ENCODE measurements at regions of chr6 and their contacts with region 1.

Region 1: DNA sequence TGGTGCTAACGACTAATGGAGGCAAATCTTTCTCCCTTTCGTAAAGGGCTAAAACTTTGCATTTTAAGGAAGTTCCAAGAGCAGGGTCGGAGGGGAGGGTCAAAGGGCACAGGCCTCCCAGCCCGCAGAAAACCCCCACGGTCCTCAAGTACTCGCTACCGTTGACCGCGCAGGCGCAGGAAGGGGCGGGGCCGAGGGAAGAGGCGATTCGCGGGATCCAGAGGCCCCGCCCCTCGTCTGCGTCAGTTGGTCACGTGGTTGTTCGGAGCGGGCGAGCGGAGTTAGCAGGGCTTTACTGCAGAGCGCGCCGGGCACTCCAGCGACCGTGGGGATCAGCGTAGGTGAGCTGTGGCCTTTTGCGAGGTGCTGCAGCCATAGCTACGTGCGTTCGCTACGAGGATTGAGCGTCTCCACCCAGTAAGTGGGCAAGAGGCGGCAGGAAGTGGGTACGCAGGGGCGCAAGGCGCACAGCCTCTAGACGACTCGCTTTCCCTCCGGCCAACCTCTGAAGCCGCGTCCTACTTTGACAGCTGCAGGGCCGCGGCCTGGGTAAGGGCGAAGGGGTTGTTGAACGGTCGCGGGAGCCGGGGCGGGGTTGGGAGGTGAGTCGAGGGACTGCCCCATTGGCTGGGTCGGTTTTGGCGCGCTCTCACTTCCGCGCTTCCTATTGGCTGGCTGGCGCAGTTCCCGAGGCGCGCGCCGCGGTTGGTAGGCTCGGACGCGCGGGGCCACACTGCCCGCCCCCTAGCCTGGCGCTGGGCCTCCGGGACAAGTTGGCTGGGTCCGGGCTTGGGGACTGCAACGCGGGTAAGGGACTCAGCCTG is at the start of gene GMNN:
- DNase-seq: peak; percentile 95 to 99 (median 97)
- ATAC-seq: peak; percentile 83
- H3K4me3 ChIP-seq: peak within 1 kb of the TSS; percentile 99
- H3K4me3 Mint-ChIP-seq: peak within 1 kb of the TSS; percentile 99
- H3K27ac ChIP-seq: peak within 1 kb of the TSS; percentile 87 to 94
- H3K27ac Mint-ChIP-seq: peak within 1 kb of the TSS; percentile 99
- H3K4me1 ChIP-seq: peaks cover 15% of the 10 kb centered on the region
- H3K4me1 Mint-ChIP-seq: peaks cover 32% of the 10 kb centered on the region
- H3K27me3 ChIP-seq: no peaks in the 10 kb centered on the region
- H3K27me3 Mint-ChIP-seq: no peaks in the 10 kb centered on the region
- CTCF ChIP-seq: no peak
- total RNA-seq, gene GMNN: 10.1 to 10.5 TPM

Region 2: DNA sequence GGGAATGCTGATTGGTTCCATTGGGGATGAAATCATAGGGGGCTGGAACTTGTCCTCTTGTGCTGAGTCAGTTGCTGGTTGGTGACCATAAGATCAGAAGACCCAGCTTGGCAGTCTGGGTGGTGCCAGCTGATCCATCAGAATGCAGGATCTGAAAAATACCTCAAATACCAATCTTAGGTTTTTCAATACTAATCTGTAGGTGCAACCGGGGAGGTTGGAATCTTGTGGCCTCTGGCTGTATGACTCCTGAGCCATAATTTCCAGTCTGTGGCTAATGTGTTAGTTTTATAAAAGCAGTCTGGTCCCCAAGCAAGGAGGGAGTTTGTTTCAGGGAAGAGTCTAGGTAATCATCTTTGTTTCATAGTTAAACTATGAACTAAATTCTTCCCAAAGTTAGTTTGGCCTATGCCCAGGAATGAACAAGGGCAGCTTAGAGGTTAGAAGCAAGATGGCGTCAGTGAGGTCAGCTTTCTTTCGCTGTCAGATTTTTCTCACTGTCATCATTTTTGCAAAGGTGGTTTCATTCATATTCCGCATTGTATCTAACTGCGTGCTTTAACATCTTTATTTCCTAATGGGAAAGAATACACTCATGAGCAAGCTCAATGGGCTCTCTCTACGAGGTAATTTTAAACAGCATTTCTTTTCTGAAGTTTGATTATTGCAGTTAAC is 21.8 kb after region 1 on chr6:
- CTCF ChIA-PET with region 1: interaction called, 3 read pairs
- POLR2A ChIA-PET with region 1: interaction called, 13 read pairs
- intact Hi-C with region 1: no loop called
- DNase-seq: no peak
- ATAC-seq: no peak
- H3K4me3 ChIP-seq: no peak overlapping the region
- H3K4me3 Mint-ChIP-seq: no peak overlapping the region
- H3K27ac ChIP-seq: no peak overlapping the region
- H3K27ac Mint-ChIP-seq: peak overlapping the region; percentile 34
- H3K4me1 ChIP-seq: no peaks in the 10 kb centered on the region
- H3K4me1 Mint-ChIP-seq: peaks cover 11% of the 10 kb centered on the region
- H3K27me3 ChIP-seq: no peaks in the 10 kb centered on the region
- H3K27me3 Mint-ChIP-seq: no peaks in the 10 kb centered on the region
- CTCF ChIP-seq: no peak

Measured in CD4-positive, alpha-beta T cell (primary cell).